ENCODE measurements at regions of chr2 and their contacts with region 1.

Region 1: DNA sequence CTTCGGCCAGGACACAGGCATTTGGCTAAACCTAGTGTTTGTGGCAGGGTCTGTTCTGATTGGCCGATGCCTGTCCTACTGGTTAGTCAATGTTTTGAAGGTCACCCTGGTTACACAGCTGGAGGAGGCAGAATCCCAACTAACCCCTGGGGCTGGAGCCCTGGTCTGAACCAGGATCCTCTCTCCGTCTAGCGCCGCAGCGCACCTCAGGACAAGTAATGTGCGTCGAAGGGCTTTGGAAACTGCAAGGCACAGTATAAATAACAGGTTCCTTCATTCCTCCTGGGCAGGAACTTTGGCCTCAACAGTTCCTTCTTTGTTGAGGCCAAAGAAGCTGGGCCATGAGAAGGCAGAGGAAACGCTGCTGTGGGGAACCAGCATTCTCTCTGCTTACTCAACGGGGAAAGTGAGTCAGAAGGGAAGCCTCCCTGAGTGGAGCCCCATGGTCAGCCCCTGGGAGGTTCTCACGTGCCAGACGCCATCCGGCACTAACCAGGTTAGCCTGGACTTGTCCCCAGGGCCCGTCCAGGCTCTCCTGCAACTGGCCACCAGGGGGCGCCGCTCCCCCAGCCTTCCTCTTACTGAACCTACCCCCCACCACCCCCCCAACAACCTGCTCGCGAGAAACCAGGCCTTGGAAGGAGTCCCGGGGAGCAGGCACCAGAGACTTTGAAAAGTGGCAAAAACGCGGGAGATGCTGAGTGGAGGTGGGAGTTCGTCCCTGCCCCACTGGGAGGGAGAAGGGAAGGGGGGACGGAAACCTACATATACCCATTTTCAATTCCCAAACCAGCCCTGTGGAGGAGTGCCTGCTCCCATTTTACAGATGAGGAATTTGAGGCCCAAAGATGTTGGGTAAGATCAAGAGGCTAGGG is 19.8 kb downstream of the TEX44 start:
- DNase-seq: peak; percentile 88
- ATAC-seq: peak; percentile 66
- H3K4me3 ChIP-seq: peak overlapping the region; percentile 18 to 34
- H3K27ac ChIP-seq: peak overlapping the region; percentile 99
- H3K4me1 ChIP-seq: peaks cover 54 to 68% of the 10 kb centered on the region in 2 experiments
- H3K27me3 ChIP-seq: no peaks in the 10 kb centered on the region
- CTCF ChIP-seq: peak in 2 of 3 experiments; percentile 90 to 96; a peak in 4 of 6 replicates
- POLR2A ChIP-seq: no peak
- RAD21 ChIP-seq: no peak

Region 2: DNA sequence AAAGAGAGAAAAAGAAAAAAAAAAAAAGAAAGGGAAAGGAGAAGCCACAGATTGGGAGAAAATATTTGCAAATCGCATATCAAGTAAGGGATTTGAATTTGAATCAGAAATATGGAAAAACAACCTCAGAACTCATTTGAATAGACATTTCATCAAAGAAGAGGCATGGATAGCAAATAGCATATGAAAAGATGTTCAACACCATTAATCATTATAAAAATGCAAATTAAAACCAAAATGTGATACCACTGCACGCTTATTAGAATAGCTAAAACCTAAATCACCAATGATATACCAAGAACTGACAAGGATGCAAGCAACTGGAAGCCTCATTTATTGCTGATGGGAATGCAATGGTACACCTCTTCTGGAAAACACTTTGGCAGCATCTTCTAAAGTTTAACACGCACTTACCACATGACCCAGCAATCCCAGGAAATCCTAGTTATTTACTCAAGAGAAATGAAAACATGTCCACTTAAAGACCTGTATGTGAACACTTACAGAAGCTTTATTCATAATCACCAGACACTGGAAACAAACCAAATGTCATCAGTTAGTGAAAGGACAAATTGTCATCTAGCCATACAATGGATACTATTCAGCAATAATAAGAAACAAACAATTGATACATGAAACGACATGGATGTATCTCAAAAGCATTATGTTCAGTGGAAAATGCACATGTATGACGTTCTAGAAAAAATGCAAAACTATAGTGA is 1908.3 kb before region 1 on chr2:
- CTCF ChIA-PET with region 1: no interaction called
- POLR2A ChIA-PET with region 1: no interaction called
- RAD21 ChIA-PET with region 1: no interaction called
- intact Hi-C with region 1: no loop called
- DNase-seq: no peak
- ATAC-seq: no peak
- H3K4me3 ChIP-seq: no peak overlapping the region
- H3K27ac ChIP-seq: no peak overlapping the region
- H3K4me1 ChIP-seq: no peaks in the 10 kb centered on the region
- H3K27me3 ChIP-seq: no peaks in the 10 kb centered on the region
- CTCF ChIP-seq: no peak
- POLR2A ChIP-seq: no peak
- RAD21 ChIP-seq: no peak

Region 3: DNA sequence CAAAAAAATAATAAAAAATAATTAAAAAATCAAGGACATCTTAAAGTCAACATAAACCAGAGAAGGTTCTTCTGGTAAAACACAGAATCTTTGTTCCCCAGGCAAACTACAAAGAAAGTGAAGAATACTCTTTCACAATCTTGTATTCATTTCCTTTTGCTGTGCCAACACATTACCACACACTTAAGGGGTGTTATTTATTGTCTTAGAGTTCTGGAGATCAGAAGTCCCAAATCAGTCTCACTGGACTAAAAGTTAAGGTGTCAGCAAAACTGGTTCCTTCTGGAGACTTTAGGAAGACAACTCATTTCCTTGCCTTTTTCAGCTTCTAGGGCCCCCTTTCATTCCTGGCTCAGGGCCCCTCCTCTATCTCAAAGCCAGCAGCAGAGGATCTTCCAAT is 912.0 kb before region 1 on chr2:
- CTCF ChIA-PET with region 1: no interaction called
- POLR2A ChIA-PET with region 1: no interaction called
- RAD21 ChIA-PET with region 1: no interaction called
- intact Hi-C with region 1: no loop called
- DNase-seq: no peak
- ATAC-seq: no peak
- H3K4me3 ChIP-seq: no peak overlapping the region
- H3K27ac ChIP-seq: no peak overlapping the region
- H3K4me1 ChIP-seq: peaks cover 0 to 24% of the 10 kb centered on the region in 2 experiments; a peak in 2 of 4 replicates
- H3K27me3 ChIP-seq: no peaks in the 10 kb centered on the region
- CTCF ChIP-seq: no peak
- POLR2A ChIP-seq: no peak
- RAD21 ChIP-seq: no peak

Region 4: DNA sequence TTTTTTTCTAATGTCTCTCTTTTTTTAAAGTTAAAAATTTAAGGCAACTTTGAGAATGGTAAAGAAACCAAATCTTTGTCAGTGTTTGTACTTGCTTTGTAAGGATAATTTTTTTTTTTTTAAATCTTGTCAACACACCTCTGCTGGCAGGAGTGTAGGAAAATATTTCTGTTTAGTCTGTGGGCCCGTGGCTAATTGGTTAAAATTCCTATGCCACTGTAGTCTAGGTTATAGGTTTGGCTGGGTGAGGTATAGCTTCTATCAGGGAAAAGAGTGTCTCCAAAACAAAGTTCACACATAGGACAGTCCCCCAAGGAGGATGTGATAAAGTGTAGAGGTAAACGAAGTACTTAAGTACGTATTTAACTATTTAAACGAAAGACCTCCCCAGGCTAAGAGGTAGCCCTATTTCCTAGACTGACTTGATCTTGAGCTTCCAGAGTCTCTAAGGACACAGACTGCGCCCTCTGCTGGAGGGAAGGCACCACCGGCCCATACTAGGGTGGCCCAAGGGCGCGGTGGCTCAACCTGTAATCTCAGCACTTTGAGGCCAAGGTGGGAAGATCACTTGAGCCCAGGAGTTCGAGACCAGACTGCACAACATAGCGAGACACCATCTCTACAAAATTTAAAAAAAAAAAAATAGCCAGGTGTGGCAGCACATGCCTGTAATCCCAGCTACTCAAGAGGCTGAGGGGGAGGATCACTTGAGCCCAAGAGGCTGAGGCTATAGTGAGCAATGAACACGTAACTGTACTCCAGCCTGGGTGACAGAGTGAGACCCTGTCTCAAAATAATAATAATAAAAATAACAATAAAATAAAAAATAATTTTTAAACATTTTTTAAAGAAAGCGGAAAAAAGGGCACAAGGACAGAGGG is 10.8 kb before region 1 on chr2:
- CTCF ChIA-PET with region 1: interaction called, 33 read pairs
- POLR2A ChIA-PET with region 1: interaction called, 5 read pairs
- RAD21 ChIA-PET with region 1: no interaction called
- intact Hi-C with region 1: no loop called
- DNase-seq: peak; percentile 82
- ATAC-seq: peak; percentile 76
- H3K4me3 ChIP-seq: no peak overlapping the region
- H3K27ac ChIP-seq: no peak overlapping the region; the same call in 1 of the 2 replicates
- H3K4me1 ChIP-seq: peaks cover 25 to 43% of the 10 kb centered on the region in 2 experiments
- H3K27me3 ChIP-seq: no peaks in the 10 kb centered on the region
- CTCF ChIP-seq: peak in 2 of 3 experiments; percentile 82 to 88; a peak in 4 of 6 replicates
- POLR2A ChIP-seq: no peak
- RAD21 ChIP-seq: no peak

Region 5: GRCh38 chr2:231642631-231643494 is 30.4 kb after region 1 on chr2:
- CTCF ChIA-PET with region 1: interaction called, 10 read pairs
- POLR2A ChIA-PET with region 1: interaction called, 47 read pairs
- RAD21 ChIA-PET with region 1: interaction called, 5 to 6 read pairs
- intact Hi-C with region 1: loop called (anchors 2 kb)
- DNase-seq: peak; percentile 99
- ATAC-seq: peak; percentile 82
- H3K4me3 ChIP-seq: peak overlapping the region; percentile 36 to 46
- H3K27ac ChIP-seq: peak overlapping the region; percentile 100
- H3K4me1 ChIP-seq: peaks cover 49 to 74% of the 10 kb centered on the region in 2 experiments
- H3K27me3 ChIP-seq: no peaks in the 10 kb centered on the region
- CTCF ChIP-seq: no peak
- POLR2A ChIP-seq: peak; percentile 64
- RAD21 ChIP-seq: no peak

Region 6: DNA sequence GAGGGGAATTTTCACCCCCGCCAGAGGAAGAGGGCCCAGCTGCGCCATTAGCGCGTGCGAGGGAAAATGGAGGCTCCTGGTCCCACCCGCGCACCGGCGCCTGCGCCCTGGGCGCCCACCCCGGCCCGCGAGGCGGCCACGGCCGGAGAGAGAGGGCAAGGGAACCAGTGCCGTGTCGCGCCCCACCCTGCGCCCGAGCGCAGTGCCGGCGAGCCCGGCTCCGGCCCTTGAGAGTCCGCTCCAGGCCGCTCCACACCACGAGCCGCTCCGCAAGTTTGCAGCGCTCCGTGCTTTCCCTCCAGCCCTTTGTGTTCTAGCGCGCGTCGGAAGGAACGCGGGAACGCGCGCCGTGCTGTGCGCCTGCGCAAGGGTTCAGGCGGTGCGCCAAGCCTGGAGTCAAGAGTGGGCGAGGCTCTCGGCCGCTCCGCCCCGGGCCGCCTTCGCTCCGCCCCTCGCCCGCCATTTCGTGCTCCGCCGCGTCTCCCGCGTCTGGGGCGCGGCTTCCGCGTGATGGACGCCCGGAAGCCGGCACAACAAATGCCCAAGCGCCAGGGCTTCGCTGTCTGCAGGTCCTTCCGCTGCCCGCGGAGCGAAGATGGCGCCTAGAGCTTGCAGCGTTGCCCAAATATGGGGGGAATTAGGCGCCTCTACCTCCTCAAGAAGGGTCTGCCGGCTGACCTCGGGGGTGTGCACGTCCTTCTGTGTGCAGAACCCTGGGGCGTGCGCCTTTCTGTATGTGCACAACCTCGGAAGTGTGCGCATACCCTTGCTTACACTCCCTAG is 49.8 kb after region 1 on chr2:
- CTCF ChIA-PET with region 1: no interaction called
- POLR2A ChIA-PET with region 1: interaction called, 17 read pairs
- RAD21 ChIA-PET with region 1: interaction called in 1 of 2 experiments, 4 read pairs
- intact Hi-C with region 1: no loop called
- DNase-seq: peak; percentile 97
- ATAC-seq: peak; percentile 58
- H3K4me3 ChIP-seq: peak overlapping the region; percentile 56 to 62
- H3K27ac ChIP-seq: peak overlapping the region; percentile 99
- H3K4me1 ChIP-seq: peaks cover 25 to 75% of the 10 kb centered on the region in 2 experiments
- H3K27me3 ChIP-seq: no peaks in the 10 kb centered on the region
- CTCF ChIP-seq: no peak
- POLR2A ChIP-seq: no peak
- RAD21 ChIP-seq: no peak

Region 7: GRCh38 chr2:231706731-231707624 is 94.6 kb after region 1 on chr2:
- CTCF ChIA-PET with region 1: interaction called, 7 read pairs
- POLR2A ChIA-PET with region 1: interaction called, 28 read pairs
- RAD21 ChIA-PET with region 1: no interaction called
- intact Hi-C with region 1: no loop called
- DNase-seq: peak; percentile 98
- ATAC-seq: peak; percentile 57
- H3K4me3 ChIP-seq: peak overlapping the region; percentile 85 to 94
- H3K27ac ChIP-seq: peak overlapping the region; percentile 99
- H3K4me1 ChIP-seq: peaks cover 20 to 44% of the 10 kb centered on the region in 2 experiments
- H3K27me3 ChIP-seq: no peaks in the 10 kb centered on the region
- CTCF ChIP-seq: peak in 2 of 3 experiments; percentile 88 to 96; a peak in 4 of 6 replicates
- POLR2A ChIP-seq: no peak
- RAD21 ChIP-seq: no peak

Region 8: DNA sequence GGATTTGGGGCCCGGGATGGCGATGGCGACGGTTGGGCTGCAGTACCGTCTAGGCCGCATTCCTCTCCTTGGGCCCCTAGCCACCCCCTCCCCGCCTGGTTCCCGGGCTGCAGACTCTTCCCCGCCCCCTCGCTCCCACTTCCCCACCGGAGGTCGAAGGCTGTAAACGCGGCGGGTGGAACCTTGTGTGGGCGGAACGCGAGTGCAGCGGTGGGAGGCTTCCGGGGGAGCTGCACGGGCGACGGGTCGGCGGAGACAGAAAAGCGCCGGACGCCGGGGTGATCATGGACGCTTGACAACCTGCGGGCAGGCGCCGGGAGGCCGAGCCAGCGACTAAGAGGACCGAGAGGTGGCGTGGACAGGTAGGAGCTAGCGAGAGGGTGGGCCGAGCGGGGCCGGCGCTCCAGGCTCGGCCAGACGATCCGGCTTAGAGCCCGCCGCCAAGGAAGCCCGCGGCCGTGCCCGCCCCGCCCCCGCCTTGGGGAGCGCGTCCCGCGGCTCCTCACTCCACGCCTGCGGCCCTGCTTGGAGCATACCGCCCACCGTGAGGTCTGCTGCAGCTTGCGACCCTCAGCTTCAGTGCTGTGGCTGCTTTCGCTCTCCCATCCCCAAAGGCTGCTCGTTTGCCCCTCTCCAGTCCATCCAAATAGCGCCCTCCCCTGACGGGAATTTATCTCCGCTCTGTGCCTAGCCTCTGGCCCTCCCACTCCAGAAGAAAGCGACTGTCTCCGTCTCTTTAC is 173.9 kb after region 1 on chr2 and contains the start of gene COPS7B:
- CTCF ChIA-PET with region 1: no interaction called
- POLR2A ChIA-PET with region 1: no interaction called
- RAD21 ChIA-PET with region 1: no interaction called
- intact Hi-C with region 1: loop called (anchors 5 kb)
- DNase-seq: peak; percentile 68
- ATAC-seq: peak; percentile 78
- H3K4me3 ChIP-seq: peak within 1 kb of the TSS; percentile 87 to 95
- H3K27ac ChIP-seq: peak within 1 kb of the TSS; percentile 83
- H3K4me1 ChIP-seq: peaks cover 11 to 23% of the 10 kb centered on the region in 2 experiments
- H3K27me3 ChIP-seq: no peaks in the 10 kb centered on the region
- CTCF ChIP-seq: peak; percentile 46 to 73 (median 55); a peak in 5 of 6 replicates
- POLR2A ChIP-seq: no peak
- RAD21 ChIP-seq: peak; percentile 42; the same call in 1 of the 2 replicates
- total RNA-seq, gene COPS7B: 52.9 TPM

Measured in HCT116 (cell line).